Gastrocnemius medialis (tissue), 4 donors: ENCODE measurements at regions of chr6 and their contacts with region 1.

Region 1: GRCh38 chr6:33585403-33586107 is 5.5 kb upstream of the BAK1 start:
- DNase-seq: peak; percentile 56 to 80
- ATAC-seq: peak in 1 of 2 donors; percentile 45
- H3K4me3 ChIP-seq: no peak overlapping the region
- H3K27ac ChIP-seq: no peak overlapping the region
- H3K4me1 ChIP-seq: peaks cover 28 to 30% of the 10 kb centered on the region in 2 donors
- H3K27me3 ChIP-seq: no peaks in the 10 kb centered on the region
- CTCF ChIP-seq: peak; percentile 98 to 100 (median 99)
- POLR2A ChIP-seq: no peak

Region 2: DNA sequence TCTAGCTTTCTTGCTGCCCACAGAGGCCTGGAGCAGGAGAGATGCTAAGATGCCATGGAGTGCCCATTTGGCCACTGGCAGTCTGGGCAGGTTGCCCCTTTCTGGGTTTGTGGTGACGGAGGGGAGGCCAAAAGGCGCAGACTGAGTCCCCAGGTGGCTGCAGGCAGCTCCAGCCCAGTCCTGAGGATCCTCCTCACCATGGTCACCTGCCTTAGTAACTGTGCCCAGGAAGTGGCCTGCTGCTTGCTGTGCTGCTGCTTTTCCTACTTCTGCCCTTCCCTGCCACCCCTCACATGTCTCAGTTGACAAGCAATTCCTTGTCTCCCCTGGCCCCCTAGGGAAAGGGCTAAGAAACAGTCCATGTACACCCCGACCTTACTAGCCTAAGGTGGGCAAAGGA is 229.3 kb before region 1 on chr6:
- in situ Hi-C with region 1: no loop called
- intact Hi-C with region 1: no loop called
- DNase-seq: no peak
- ATAC-seq: no peak
- H3K4me3 ChIP-seq: no peak overlapping the region
- H3K27ac ChIP-seq: no peak overlapping the region
- H3K4me1 ChIP-seq: no peaks in the 10 kb centered on the region
- H3K27me3 ChIP-seq: no peaks in the 10 kb centered on the region
- CTCF ChIP-seq: no peak
- POLR2A ChIP-seq: no peak

Region 3: DNA sequence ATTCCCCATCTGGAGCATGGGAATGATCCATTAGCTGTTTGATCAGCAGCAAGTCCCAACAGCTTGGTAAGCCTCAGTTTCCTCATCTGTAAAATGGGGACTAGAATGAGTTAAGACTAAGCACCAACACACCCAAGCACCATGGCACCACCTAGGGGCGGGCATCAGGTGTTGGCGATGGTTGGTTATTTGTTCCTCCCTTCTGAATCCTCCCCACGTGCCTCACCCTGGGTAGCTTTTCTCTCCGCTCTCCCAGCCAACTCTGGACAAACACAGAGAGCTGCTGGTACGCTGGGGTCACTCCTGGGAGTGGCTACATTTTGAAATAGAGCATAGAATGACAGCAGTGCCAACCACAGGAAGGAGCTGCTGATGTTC is 22.2 kb after region 1 on chr6:
- in situ Hi-C with region 1: no loop called
- intact Hi-C with region 1: loop called (anchors 1 kb)
- DNase-seq: peak; percentile 48 to 55
- ATAC-seq: peak; percentile 74 to 75
- H3K4me3 ChIP-seq: no peak overlapping the region
- H3K27ac ChIP-seq: peak overlapping the region in 1 of 4 donors; percentile 24
- H3K4me1 ChIP-seq: peaks cover 11 to 32% of the 10 kb centered on the region in 2 donors
- H3K27me3 ChIP-seq: no peaks in the 10 kb centered on the region
- CTCF ChIP-seq: peak in 4 of 5 experiments; percentile 38 to 59 (median 40)
- POLR2A ChIP-seq: no peak

Region 4: GRCh38 chr6:33672808-33673207 is 87.3 kb after region 1 on chr6:
- in situ Hi-C with region 1: loop called in 1 of 4 experiments (anchors 5 kb)
- intact Hi-C with region 1: no loop called
- DNase-seq: peak; percentile 89 to 93
- ATAC-seq: peak; percentile 99
- H3K4me3 ChIP-seq: no peak overlapping the region
- H3K27ac ChIP-seq: peak overlapping the region in 1 of 4 donors; percentile 59
- H3K4me1 ChIP-seq: peaks cover 0 to 5% of the 10 kb centered on the region in 2 donors
- H3K27me3 ChIP-seq: no peaks in the 10 kb centered on the region
- CTCF ChIP-seq: peak; percentile 19 to 58 (median 33)
- POLR2A ChIP-seq: no peak

Region 5: DNA sequence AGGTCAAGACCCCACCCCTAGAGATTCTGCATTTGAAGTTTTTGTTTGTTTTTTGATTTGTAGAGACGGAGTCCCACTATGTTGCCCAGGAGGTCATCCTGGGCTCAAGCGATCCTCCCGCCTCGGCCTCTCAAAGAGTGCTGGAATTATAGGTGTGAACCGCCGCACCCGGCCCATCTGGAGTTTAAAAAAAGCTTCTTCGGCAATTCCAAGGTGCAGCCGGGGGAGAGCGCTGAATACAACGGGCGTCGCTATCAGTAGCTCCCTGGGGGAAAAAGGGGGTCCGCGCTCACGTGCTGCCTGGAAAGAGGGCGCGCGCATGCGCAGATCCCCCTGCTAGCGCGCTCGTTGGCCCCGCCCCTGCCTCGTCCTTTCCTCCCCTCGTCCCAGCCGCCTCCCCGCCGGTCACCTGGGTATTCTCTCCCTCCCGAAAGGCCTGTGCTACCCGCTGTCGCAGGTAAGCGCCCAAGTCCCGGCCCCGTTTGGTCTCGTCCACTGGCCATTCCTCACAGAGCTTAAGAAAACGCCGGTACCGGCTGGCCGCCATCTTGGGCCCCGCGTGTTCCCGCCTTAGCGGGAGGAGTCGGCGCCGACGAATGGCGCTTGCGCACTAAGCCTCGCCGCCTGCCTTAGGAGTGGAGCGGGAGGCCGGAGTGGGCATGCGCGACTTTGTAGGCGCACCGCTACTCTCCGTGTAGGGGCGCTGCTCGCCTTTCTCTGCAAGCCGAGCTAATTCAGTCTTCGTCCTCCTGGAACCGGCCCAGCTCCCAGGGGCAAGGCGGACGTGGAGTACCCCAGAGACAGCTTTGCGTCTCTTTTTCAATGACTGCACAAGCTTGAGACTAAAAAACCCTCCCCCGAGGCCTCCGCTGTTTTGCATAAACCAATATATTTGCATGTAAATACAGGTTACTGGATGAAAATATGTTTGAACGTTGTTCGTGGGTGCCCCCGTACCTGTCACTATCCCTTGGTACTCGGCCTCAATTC is 125.9 kb after region 1 on chr6 and contains the start of gene UQCC2:
- in situ Hi-C with region 1: loop called in 2 of 4 experiments (anchors 5 to 10 kb)
- intact Hi-C with region 1: no loop called
- DNase-seq: peak; percentile 96
- ATAC-seq: peak; percentile 89 to 93
- H3K4me3 ChIP-seq: peak within 1 kb of the TSS; percentile 85 to 100 (median 92)
- H3K27ac ChIP-seq: peak within 1 kb of the TSS; percentile 96 to 100 (median 97)
- H3K4me1 ChIP-seq: peaks cover 20 to 30% of the 10 kb centered on the region in 2 donors
- H3K27me3 ChIP-seq: no peaks in the 10 kb centered on the region
- CTCF ChIP-seq: peak; percentile 62 to 83 (median 64)
- POLR2A ChIP-seq: peak; percentile 87 to 88
- total RNA-seq, gene UQCC2: 50.7 to 101 (median 63.5) TPM

Region 6: DNA sequence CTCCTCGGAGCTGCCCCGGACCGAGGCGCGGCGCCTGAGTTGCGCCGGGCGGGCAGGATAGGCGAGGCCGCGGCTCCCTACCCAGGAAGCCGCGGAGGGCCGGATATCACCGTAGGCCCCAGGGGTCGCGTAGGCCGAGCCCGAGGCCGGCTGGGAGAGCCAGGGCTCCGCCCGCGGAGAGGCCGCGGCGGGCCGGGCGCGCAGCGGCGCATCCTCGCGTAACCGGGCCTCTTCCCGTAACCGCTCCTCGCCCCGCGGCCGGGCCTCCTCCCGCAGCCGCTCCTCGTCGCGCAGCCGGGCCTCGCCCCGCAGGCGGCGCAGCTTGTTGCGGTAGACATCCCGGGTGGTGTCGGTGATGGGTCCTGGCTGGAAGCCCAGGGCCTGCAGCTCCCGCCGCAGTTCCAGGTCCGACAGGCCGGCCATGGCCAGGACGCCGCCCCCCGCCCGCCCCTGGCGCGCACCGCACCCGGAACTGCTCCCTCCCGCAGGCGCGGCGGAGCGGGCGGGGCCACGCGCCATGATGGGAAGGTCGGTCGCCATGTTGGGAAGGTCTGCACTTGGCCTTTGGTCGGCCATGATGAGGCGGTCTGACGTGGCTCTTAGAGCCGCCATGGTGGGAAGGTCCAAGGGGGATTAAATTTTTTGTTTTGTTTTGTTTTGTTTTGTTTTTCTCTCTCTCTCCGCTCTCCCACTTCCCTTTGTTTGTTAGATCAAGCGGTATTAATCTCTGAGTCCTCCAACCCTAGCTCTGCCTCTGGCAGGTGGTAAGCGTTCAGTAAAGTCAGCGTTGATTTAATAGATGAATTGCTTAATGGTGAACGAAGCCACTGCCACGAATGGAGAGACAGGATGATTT is 203.4 kb after region 1 on chr6 and contains the start of gene LEMD2:
- in situ Hi-C with region 1: no loop called
- intact Hi-C with region 1: loop called (anchors 5 kb)
- DNase-seq: peak; percentile 89 to 93
- ATAC-seq: peak; percentile 89 to 93
- H3K4me3 ChIP-seq: peak within 1 kb of the TSS; percentile 66 to 90 (median 68)
- H3K27ac ChIP-seq: peak within 1 kb of the TSS; percentile 94 to 97 (median 94)
- H3K4me1 ChIP-seq: peaks cover 31 to 36% of the 10 kb centered on the region in 2 donors
- H3K27me3 ChIP-seq: peaks cover 6 to 8% (median 8%) of the 10 kb centered on the region in 3 donors
- CTCF ChIP-seq: peak in 1 of 5 experiments; percentile 13
- POLR2A ChIP-seq: peak; percentile 92 to 96
- total RNA-seq, gene LEMD2: 34.1 to 39.1 (median 38.1) TPM

Region 7: GRCh38 chr6:34196126-34196830 is 610.7 kb after region 1 on chr6:
- in situ Hi-C with region 1: no loop called
- intact Hi-C with region 1: no loop called
- DNase-seq: peak; percentile 62 to 76
- ATAC-seq: peak; percentile 95 to 98
- H3K4me3 ChIP-seq: peak overlapping the region; percentile 56 to 87 (median 64)
- H3K27ac ChIP-seq: no peak overlapping the region
- H3K4me1 ChIP-seq: peaks cover 3 to 5% of the 10 kb centered on the region in 2 donors
- H3K27me3 ChIP-seq: no peaks in the 10 kb centered on the region
- CTCF ChIP-seq: peak; percentile 94 to 98 (median 98)
- POLR2A ChIP-seq: no peak